Caco-2 (cell line): ENCODE measurements at regions of chr12 and their contacts with region 1.

Region 1: GRCh38 chr12:132986001-132986912 is at the start of gene ZNF26:
- DNase-seq: peak; percentile 89 to 90
- H3K4me3 ChIP-seq: peak within 1 kb of the TSS; percentile 96
- H3K4me3 Mint-ChIP-seq: peak within 1 kb of the TSS; percentile 80
- H3K27ac Mint-ChIP-seq: peak within 1 kb of the TSS; percentile 69
- H3K4me1 ChIP-seq: no peaks in the 10 kb centered on the region
- H3K4me1 Mint-ChIP-seq: peaks cover 8% of the 10 kb centered on the region
- H3K27me3 ChIP-seq: no peaks in the 10 kb centered on the region
- H3K27me3 Mint-ChIP-seq: no peaks in the 10 kb centered on the region
- CTCF ChIP-seq: no peak
- total RNA-seq, gene ZNF26: 15.0 and 17.8 TPM in 2 replicates

Region 2: DNA sequence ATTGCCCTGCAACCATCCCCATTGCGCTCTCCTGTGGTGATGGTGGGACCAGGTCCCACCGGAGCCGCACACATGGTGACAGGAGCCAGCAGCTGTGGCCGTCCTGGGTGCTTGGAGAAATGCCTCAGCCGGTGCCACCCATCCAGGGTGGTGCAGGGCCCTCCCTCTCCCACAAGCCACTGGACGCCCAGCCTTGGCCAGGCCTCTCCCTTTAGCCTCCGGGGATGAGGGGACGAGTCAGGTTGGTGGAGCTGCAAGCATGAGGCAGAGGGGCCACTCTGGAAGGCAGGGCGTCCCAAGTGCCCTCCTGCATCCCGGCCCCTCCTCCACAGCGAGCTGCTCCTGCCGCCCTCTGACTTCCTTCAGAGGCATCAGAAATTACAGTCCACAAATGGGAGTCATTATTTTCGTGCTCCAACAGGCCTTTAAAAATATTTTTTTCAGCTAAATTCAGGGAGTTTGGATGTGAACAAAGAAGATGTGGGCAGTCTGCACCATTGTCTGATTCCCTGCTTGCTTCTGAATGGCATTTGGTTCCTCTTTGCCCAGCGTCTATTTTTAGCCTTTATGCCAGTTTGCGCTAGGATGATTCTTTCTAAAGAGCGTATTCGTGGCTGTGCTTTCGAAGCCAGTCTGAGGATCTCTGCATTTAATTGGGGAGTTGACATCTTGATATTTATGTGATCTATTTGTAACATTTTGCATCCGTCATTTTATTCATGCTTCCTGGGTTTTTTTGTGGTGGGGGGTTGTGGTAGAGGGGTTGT is 1843.2 kb before region 1 on chr12:
- CTCF ChIA-PET with region 1: no interaction called
- POLR2A ChIA-PET with region 1: no interaction called
- intact Hi-C with region 1: no loop called
- DNase-seq: no peak
- H3K4me3 ChIP-seq: no peak overlapping the region
- H3K4me3 Mint-ChIP-seq: no peak overlapping the region
- H3K27ac Mint-ChIP-seq: no peak overlapping the region
- H3K4me1 ChIP-seq: no peaks in the 10 kb centered on the region
- H3K4me1 Mint-ChIP-seq: no peaks in the 10 kb centered on the region
- H3K27me3 ChIP-seq: no peaks in the 10 kb centered on the region
- H3K27me3 Mint-ChIP-seq: peaks cover 3% of the 10 kb centered on the region
- CTCF ChIP-seq: no peak

Region 3: DNA sequence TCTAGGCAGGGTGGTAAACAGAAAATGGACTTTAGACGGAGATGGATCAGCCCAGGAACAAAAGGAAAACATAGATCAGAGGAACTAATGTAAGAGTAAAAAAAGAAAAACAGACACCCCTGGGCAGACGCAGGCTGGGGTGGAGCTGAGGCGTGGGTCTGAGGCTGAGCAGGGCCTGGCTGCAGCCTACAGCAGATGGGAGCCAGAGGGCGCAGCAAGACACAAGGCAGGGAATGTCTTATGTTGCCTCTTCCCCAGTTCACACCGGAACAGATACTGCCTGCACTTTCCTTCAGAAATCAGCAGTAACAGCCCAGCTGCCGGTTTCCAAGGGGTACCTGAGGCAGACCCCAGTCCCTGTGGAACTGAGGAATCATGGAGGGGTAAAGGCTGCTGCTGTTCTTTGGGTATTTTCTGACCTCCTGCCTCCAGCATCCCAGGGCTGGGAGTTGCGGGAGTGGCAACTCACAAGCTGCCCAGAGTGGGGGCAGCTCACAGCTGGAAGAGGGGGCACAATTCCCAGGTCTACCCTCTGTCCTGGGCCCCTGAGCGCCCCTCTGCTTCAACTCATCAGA is 39.9 kb before region 1 on chr12:
- CTCF ChIA-PET with region 1: no interaction called
- POLR2A ChIA-PET with region 1: no interaction called
- intact Hi-C with region 1: no loop called
- DNase-seq: no peak
- H3K4me3 ChIP-seq: no peak overlapping the region
- H3K4me3 Mint-ChIP-seq: no peak overlapping the region
- H3K27ac Mint-ChIP-seq: no peak overlapping the region
- H3K4me1 ChIP-seq: no peaks in the 10 kb centered on the region
- H3K4me1 Mint-ChIP-seq: no peaks in the 10 kb centered on the region
- H3K27me3 ChIP-seq: no peaks in the 10 kb centered on the region
- H3K27me3 Mint-ChIP-seq: no peaks in the 10 kb centered on the region
- CTCF ChIP-seq: no peak

Region 4: GRCh38 chr12:133037207-133038005 is 51.1 kb after region 1 on chr12 and contains the start of gene ZNF84:
- CTCF ChIA-PET with region 1: no interaction called
- POLR2A ChIA-PET with region 1: interaction called, 3 read pairs
- intact Hi-C with region 1: loop called (anchors 2 kb)
- DNase-seq: peak; percentile 96 to 97
- H3K4me3 ChIP-seq: peak within 1 kb of the TSS; percentile 92
- H3K4me3 Mint-ChIP-seq: peak within 1 kb of the TSS; percentile 90
- H3K27ac Mint-ChIP-seq: peak within 1 kb of the TSS; percentile 97
- H3K4me1 ChIP-seq: no peaks in the 10 kb centered on the region
- H3K4me1 Mint-ChIP-seq: no peaks in the 10 kb centered on the region
- H3K27me3 ChIP-seq: no peaks in the 10 kb centered on the region
- H3K27me3 Mint-ChIP-seq: no peaks in the 10 kb centered on the region
- CTCF ChIP-seq: no peak
- total RNA-seq, gene ZNF84: 21.8 and 24.9 TPM in 2 replicates

Region 5: DNA sequence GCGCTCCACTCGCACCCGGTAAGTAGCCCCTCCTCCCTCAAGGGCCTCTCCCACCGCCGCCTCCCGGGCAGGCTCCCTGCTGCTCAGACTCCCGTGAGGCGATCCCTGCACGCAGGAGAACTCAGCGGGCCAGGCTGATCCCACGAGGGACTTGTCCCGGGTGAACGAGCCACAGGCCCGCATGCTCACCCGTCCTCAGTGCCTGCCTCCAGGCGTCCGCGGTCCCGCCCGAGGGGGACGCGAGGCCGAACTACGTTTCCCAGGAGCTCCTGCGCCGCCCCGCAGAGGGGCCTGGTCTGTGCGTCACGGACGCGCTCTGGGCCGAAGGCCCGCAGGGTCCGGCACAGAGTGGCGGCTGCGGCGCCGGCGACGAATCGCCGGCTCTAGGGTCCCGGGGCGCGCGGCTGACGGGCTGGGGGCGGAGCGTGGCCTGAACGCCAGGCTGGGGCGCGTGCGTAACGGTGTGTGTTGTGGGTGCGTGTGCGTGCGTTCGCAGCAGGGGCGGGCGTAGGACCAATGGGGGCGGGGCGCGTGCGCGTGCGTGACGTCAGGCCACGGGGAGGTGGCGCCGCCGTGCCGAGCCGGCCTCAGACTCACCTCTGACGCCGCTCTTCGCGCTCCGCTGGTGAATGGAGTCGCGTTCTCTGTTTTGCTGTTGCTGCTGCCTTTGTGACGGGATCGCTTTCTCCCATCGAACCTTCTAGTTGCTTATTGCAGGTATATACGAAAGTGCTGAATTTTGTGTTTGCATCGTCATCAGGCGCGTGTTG is 144.0 kb after region 1 on chr12 and contains the starts of genes ZNF10 and ZNF891:
- CTCF ChIA-PET with region 1: no interaction called
- POLR2A ChIA-PET with region 1: no interaction called
- intact Hi-C with region 1: loop called (anchors 2 kb)
- DNase-seq: peak; percentile 97 to 98
- H3K4me3 ChIP-seq: peak within 1 kb of the TSS; percentile 99
- H3K4me3 Mint-ChIP-seq: peak within 1 kb of the TSS; percentile 97
- H3K27ac Mint-ChIP-seq: peak within 1 kb of the TSS; percentile 98
- H3K4me1 ChIP-seq: no peaks in the 10 kb centered on the region; the same call in 1 of the 2 replicates
- H3K4me1 Mint-ChIP-seq: no peaks in the 10 kb centered on the region
- H3K27me3 ChIP-seq: no peaks in the 10 kb centered on the region
- H3K27me3 Mint-ChIP-seq: no peaks in the 10 kb centered on the region
- CTCF ChIP-seq: no peak
- total RNA-seq, gene ZNF10: 6.9 and 7.6 TPM in 2 replicates
- total RNA-seq, gene ZNF891: 2.0 and 2.3 TPM in 2 replicates

Region 6: DNA sequence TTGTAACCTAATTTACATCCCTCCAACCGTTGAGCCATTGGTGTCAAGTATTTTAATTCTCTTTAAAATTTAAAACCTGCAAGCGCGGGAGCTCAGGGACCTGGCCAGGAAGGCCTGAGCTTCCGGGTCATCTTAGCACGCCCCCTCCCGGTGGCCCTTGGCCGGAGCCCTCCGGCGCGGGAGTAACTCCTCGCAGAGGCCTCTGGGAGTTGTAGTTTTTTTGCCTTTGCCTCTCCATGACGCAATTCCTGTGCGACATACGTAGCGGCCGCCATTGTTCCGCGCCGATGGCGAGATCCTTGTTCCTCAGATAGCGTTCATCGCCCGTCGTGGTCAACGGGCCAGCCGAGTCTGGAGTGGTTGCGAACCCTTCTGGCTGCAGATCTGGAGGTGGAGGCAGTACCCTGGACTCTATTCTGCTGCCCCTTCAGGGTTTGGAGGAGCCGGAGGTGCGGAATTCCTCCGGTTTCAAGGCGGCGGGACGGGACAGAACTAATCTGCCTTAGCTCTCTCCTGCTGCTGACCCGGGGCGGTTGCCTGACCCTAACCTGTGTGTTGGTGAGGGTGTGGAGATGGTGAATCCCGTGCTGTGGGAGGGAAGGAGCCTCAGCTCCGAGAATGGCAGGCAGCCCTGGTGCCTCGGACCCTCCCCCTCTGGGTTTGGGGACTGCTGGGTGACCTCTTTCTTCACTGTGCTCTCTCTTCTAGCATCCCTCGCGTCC is 195.1 kb after region 1 on chr12 and contains the start of gene ZNF268:
- CTCF ChIA-PET with region 1: interaction called, 3 read pairs
- POLR2A ChIA-PET with region 1: no interaction called
- intact Hi-C with region 1: loop called (anchors 1 kb)
- DNase-seq: peak; percentile 94 to 96
- H3K4me3 ChIP-seq: peak within 1 kb of the TSS; percentile 83
- H3K4me3 Mint-ChIP-seq: peak within 1 kb of the TSS; percentile 97
- H3K27ac Mint-ChIP-seq: peak within 1 kb of the TSS; percentile 99
- H3K4me1 ChIP-seq: peaks cover 7% of the 10 kb centered on the region
- H3K4me1 Mint-ChIP-seq: no peaks in the 10 kb centered on the region
- H3K27me3 ChIP-seq: no peaks in the 10 kb centered on the region
- H3K27me3 Mint-ChIP-seq: no peaks in the 10 kb centered on the region
- CTCF ChIP-seq: peak; percentile 79 to 94
- total RNA-seq, gene ZNF268: 24.1 and 32.0 TPM in 2 replicates